Breast epithelium (tissue), 4 donors: ENCODE measurements at regions of chr17 and their contacts with region 1.

Region 1: GRCh38 chr17:29293890-29294579 is at the start of gene NUFIP2:
- DNase-seq: peak; percentile 99
- H3K4me3 ChIP-seq: peak within 1 kb of the TSS; percentile 75 to 97 (median 95)
- H3K27ac ChIP-seq: peak within 1 kb of the TSS; percentile 94 to 99
- H3K4me1 ChIP-seq: peaks cover 4 to 23% of the 10 kb centered on the region in 2 donors
- H3K27me3 ChIP-seq: no peaks in the 10 kb centered on the region
- CTCF ChIP-seq: peak in 1 of 3 donors; percentile 18
- POLR2A ChIP-seq: peak; percentile 98
- total RNA-seq, gene NUFIP2: 35.8 to 46.2 (median 36.4) TPM

Region 2: GRCh38 chr17:29219378-29220047 is 74.5 kb before region 1 on chr17:
- intact Hi-C with region 1: loop called (anchors 2 kb)
- DNase-seq: peak; percentile 56 to 60
- H3K4me3 ChIP-seq: no peak overlapping the region
- H3K27ac ChIP-seq: no peak overlapping the region
- H3K4me1 ChIP-seq: no peaks in the 10 kb centered on the region
- H3K27me3 ChIP-seq: no peaks in the 10 kb centered on the region
- CTCF ChIP-seq: peak; percentile 78 to 94 (median 92)
- POLR2A ChIP-seq: no peak

Region 3: DNA sequence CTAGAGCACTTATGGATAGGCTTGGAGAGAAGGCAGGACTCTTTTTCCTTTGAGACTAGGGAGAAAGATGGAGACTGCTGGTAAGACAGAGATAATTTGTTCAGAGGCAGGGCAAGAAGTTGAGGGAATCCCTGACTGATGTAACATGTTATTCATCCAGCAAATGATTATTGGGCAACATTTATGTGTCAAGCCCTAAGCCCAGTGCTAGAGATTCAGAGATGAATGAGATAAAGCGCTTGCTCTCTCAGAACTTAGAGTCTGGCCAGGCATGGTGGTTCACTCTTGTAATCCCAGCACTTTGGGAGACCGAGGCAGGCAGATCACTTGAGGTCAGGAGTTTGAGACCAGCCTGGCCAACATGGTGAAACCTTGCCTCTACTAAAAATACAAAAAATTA is 47.7 kb after region 1 on chr17:
- intact Hi-C with region 1: no loop called
- DNase-seq: no peak
- H3K4me3 ChIP-seq: no peak overlapping the region
- H3K27ac ChIP-seq: no peak overlapping the region
- H3K4me1 ChIP-seq: no peaks in the 10 kb centered on the region
- H3K27me3 ChIP-seq: no peaks in the 10 kb centered on the region
- CTCF ChIP-seq: no peak
- POLR2A ChIP-seq: no peak